ENCODE measurements at regions of chr14 and their contacts with region 1.

Region 1: GRCh38 chr14:100726550-100727085 is at the start of gene DLK1:
- DNase-seq: peak; percentile 91
- H3K4me3 ChIP-seq: peak within 1 kb of the TSS in 1 of 2 experiments; percentile 58; a peak in 2 of 4 replicates
- H3K27ac ChIP-seq: peak within 1 kb of the TSS in 1 of 2 experiments; percentile 91; a peak in 2 of 4 replicates
- H3K4me1 ChIP-seq: peaks cover 0 to 79% of the 10 kb centered on the region in 2 experiments; a peak in 1 of 4 replicates
- H3K27me3 ChIP-seq: peaks cover 23% of the 10 kb centered on the region; the same call in 1 of the 2 replicates
- CTCF ChIP-seq: no peak
- EP300 ChIP-seq: no peak
- RAD21 ChIP-seq: no peak
- polyA plus RNA-seq, gene DLK1: 1.2 and 1.7 TPM in 2 replicates

Region 2: GRCh38 chr14:100629696-100630095 is 96.9 kb before region 1 on chr14:
- CTCF ChIA-PET with region 1: no interaction called
- POLR2A ChIA-PET with region 1: no interaction called
- DNase-seq: no peak
- H3K4me3 ChIP-seq: no peak overlapping the region
- H3K27ac ChIP-seq: no peak overlapping the region
- H3K4me1 ChIP-seq: peaks cover 0 to 12% of the 10 kb centered on the region in 2 experiments; a peak in 1 of 4 replicates
- H3K27me3 ChIP-seq: peaks cover 10% of the 10 kb centered on the region; the same call in 1 of the 2 replicates
- CTCF ChIP-seq: no peak
- EP300 ChIP-seq: no peak
- RAD21 ChIP-seq: no peak

Region 3: DNA sequence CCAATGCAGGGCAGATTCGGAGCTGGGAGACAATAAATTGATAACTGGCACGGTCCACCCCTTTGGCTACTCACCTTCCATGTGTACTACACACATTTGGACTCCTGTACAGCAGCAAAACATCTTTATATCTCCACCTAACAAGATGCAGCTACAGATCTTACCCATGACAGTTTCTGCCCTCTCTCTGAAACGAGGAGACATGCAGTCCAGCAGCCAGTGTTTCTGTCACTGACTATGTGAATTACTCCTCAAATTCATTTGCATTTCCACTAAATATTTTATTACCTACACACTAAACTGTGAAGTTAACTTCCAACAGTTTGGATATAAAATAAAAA is 80.7 kb before region 1 on chr14:
- CTCF ChIA-PET with region 1: no interaction called
- POLR2A ChIA-PET with region 1: no interaction called
- DNase-seq: no peak
- H3K4me3 ChIP-seq: peak overlapping the region in 1 of 2 experiments; percentile 39; a peak in 1 of 4 replicates
- H3K27ac ChIP-seq: no peak overlapping the region
- H3K4me1 ChIP-seq: peaks cover 5 to 31% of the 10 kb centered on the region in 2 experiments; a peak in 2 of 4 replicates
- H3K27me3 ChIP-seq: no peaks in the 10 kb centered on the region
- CTCF ChIP-seq: no peak
- EP300 ChIP-seq: no peak
- RAD21 ChIP-seq: no peak

Region 4: DNA sequence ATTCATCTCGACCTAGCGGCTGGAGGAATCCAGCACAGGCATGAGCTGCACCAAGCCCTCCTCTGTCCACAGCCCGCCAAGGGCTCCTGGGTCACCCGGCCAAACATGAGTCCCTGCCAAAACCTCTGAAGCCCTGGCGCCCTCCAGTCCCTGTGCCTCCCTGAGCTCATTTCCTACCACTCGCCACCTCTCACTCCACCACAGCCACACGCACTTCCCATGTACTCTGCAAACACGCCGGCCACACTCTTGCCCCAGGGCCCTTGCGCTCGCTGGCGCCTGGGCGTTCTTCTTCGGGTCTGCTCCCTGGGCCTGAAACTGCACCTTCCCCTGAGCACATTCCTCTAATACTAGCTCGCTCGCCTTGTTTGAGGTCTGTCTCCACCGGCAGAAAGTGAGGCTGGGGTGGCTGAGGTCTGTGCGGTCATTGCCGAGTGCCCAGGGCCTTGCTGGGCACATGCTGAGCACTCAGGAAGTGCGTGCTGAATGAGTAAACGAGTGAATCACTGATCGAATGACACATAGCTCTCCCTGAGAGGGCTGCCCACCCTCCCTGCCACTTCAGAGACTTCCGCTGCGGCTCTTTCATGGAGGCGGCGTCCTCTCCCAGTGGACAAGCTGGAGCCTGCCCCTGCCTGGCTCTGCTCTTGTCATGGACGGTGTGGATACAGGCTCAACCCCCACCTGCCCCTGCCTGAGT is 33.6 kb before region 1 on chr14:
- CTCF ChIA-PET with region 1: interaction called, 3 read pairs
- POLR2A ChIA-PET with region 1: interaction called, 37 read pairs
- DNase-seq: no peak
- H3K4me3 ChIP-seq: peak overlapping the region in 1 of 2 experiments; percentile 44; a peak in 2 of 4 replicates
- H3K27ac ChIP-seq: peak overlapping the region; percentile 91 to 94
- H3K4me1 ChIP-seq: peaks cover 55 to 83% of the 10 kb centered on the region in 2 experiments
- H3K27me3 ChIP-seq: no peaks in the 10 kb centered on the region
- CTCF ChIP-seq: no peak
- EP300 ChIP-seq: peak in 1 of 2 experiments; percentile 87; a peak in 2 of 4 replicates
- RAD21 ChIP-seq: no peak

Region 5: DNA sequence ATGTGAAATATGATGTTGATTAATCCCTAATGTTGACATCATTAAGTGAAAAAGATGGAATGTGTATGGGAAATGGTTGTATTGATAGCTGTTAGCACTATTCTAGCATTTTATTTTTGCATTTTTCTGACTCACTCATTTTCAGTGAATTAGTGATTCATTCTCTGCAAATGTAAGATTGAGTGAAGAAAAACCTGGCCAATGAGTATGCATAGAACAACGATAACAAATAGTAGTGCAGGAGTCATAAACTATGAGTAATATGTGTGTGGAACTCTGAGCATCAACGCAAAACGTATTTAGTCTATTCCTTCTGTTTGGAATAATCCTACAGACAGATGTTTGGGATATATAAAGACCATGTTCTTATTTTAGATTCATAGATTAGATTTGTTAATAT is 253.2 kb after region 1 on chr14:
- CTCF ChIA-PET with region 1: no interaction called
- POLR2A ChIA-PET with region 1: no interaction called
- DNase-seq: no peak
- H3K4me3 ChIP-seq: no peak overlapping the region
- H3K27ac ChIP-seq: peak overlapping the region in 1 of 2 experiments; percentile 35; a peak in 1 of 4 replicates
- H3K4me1 ChIP-seq: no peaks in the 10 kb centered on the region
- H3K27me3 ChIP-seq: no peaks in the 10 kb centered on the region
- CTCF ChIP-seq: no peak
- EP300 ChIP-seq: no peak
- RAD21 ChIP-seq: no peak